B cell (primary cell): ENCODE measurements at regions of chr2 and their contacts with region 1.

Region 1: DNA sequence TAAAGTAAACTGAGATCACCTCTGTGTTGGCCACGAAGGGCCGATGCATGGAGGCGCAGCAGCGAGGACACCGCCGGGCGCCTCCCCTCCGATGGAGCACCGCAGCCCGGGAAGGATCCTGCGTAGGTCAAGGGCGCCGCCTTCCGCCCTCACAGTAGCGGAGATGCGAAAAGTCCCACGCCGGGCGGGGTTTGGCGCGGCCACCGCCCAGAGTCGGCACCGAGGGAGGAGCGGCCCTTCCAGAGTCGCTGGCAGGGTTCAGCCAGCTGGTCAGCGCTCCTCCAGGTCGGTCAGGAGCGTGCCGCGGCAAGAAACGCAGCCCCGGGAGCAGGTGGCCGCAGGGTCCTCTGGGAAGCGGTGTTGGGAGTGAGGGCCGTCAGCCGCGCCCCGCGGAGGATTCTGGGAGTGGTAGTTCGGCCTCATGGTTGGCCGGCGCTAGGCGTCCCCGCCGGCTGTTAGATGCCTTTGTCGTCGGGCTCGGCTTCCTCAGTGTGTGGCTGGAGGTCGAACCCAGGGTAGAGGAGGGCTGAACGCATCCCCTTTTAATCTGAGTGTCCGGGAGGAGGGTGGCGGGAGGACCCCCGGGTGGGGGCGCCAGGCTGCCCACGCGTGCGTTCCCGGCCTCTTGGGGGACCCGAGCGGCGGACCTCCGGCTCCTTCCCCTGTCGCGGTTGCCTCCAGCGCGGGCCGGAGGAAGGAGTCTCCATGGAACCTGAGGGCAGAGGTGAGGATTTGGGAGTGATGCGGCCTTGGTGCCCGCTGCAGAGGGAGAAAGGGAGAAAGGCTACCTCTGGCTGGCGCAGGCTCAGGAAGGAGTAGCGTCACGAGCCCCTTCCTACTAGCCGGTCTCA is at the start of gene ZNF892:
- DNase-seq: peak; percentile 87
- ATAC-seq: peak; percentile 97
- H3K4me3 ChIP-seq: peak within 1 kb of the TSS; percentile 51 to 94 (median 78)
- H3K4me3 Mint-ChIP-seq: peak within 1 kb of the TSS; percentile 96
- H3K27ac ChIP-seq: peak within 1 kb of the TSS; percentile 66 to 89
- H3K27ac Mint-ChIP-seq: peak within 1 kb of the TSS; percentile 86
- H3K4me1 ChIP-seq: peaks cover 10 to 16% of the 10 kb centered on the region in 2 donors
- H3K4me1 Mint-ChIP-seq: peaks cover 16% of the 10 kb centered on the region
- H3K27me3 ChIP-seq: no peaks in the 10 kb centered on the region
- H3K27me3 Mint-ChIP-seq: no peaks in the 10 kb centered on the region
- CTCF ChIP-seq: peak; percentile 42
- total RNA-seq, gene ZNF892: 5.5 and 8.3 TPM in 2 replicates

Region 2: DNA sequence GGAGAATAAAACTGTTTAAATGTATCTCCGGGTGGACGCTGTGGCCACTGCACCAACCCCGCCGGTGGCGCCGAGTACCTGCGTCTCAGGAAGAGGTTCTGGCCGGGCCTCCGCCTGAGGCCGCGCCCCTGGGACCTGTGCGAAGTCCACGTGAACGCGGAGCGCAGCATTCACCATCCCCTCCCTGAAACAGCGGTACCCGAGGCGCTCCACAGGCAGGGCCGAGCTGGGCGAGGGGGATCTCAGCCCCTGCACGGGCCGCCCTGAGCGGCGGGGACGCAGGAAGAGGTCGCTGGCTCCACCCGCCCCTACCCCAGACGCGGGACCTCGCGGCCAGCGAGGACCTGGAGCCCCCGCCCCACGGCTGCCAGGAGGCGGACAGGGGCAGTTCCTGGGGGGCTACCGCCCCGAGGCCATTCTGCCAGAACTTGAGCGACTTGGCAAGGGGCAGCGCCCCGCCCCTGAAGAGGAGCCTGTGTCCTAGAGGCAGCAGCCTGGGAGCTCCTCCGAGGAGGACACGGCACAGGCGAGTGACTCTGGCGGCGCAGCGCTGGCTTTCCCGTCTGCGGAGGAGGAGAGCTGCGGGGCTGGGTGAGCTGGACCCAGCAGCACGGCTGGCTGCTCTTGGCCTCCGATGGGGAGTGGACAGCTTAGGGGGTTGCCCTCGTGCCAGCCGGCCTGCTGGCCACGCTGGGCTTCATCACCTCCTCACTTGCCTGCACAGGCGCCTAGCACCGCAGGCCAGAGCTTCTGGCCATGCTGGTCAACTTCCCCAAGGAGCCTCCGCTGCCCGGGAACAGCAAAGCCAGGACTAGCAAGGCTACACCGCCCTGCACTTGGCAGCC is 345.8 kb before region 1 on chr2:
- CTCF ChIA-PET with region 1: no interaction called
- POLR2A ChIA-PET with region 1: no interaction called
- intact Hi-C with region 1: no loop called
- DNase-seq: no peak
- ATAC-seq: no peak
- H3K4me3 ChIP-seq: no peak overlapping the region
- H3K4me3 Mint-ChIP-seq: no peak overlapping the region
- H3K27ac ChIP-seq: no peak overlapping the region
- H3K27ac Mint-ChIP-seq: no peak overlapping the region
- H3K4me1 ChIP-seq: no peaks in the 10 kb centered on the region
- H3K4me1 Mint-ChIP-seq: no peaks in the 10 kb centered on the region
- H3K27me3 ChIP-seq: peaks cover 0 to 12% (median 2%) of the 10 kb centered on the region in 4 experiments
- H3K27me3 Mint-ChIP-seq: peaks cover 25% of the 10 kb centered on the region
- CTCF ChIP-seq: no peak

Region 3: DNA sequence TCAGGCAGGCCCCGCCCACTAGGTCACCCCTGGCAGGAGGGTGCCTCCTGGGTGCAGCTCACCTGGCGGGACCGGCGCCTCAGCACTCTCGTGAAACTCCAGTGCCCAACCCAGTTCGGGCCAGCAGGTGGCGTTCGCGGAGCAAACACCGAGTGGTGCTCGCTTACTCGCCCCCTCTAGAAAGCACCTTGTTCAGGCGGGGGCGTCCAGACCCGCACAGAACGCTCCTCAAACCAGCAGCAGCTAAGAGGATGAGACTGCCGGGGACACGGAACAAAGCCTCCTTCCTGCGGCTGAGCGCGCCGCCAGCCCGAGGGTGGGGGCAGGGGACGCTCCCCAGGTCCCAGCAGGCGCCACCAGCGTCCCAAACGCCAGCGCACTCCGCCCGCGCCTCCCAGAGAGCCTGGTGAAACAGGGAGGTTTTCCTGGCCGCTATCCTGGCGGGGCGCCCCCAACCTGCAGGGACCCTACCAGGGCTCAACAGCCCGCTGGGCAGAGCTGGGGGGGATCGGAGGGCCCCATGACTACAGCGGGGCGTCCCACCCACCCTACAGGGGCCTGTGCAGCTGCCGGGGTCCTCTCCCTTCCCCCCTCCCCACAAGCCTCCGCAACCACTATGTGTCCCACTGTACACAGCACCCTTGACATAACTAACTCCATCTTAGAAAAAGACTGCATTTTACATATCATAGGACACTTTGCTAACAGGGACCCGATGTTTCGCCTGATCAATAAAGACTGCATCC is 130.4 kb before region 1 on chr2:
- CTCF ChIA-PET with region 1: interaction called, 5 read pairs
- POLR2A ChIA-PET with region 1: no interaction called
- intact Hi-C with region 1: loop called (anchors 2 kb)
- DNase-seq: peak; percentile 73
- ATAC-seq: peak; percentile 90
- H3K4me3 ChIP-seq: peak overlapping the region in 4 of 5 experiments; percentile 7 to 41 (median 20)
- H3K4me3 Mint-ChIP-seq: peak overlapping the region; percentile 64
- H3K27ac ChIP-seq: no peak overlapping the region
- H3K27ac Mint-ChIP-seq: no peak overlapping the region
- H3K4me1 ChIP-seq: peaks cover 9 to 11% of the 10 kb centered on the region in 2 donors
- H3K4me1 Mint-ChIP-seq: peaks cover 10% of the 10 kb centered on the region
- H3K27me3 ChIP-seq: peaks cover 0 to 26% (median 8%) of the 10 kb centered on the region in 4 experiments
- H3K27me3 Mint-ChIP-seq: peaks cover 17% of the 10 kb centered on the region
- CTCF ChIP-seq: peak; percentile 82

Region 4: GRCh38 chr2:95087379-95087778 is 120.0 kb before region 1 on chr2:
- CTCF ChIA-PET with region 1: no interaction called
- POLR2A ChIA-PET with region 1: no interaction called
- intact Hi-C with region 1: no loop called
- DNase-seq: no peak
- ATAC-seq: no peak
- H3K4me3 ChIP-seq: no peak overlapping the region
- H3K4me3 Mint-ChIP-seq: no peak overlapping the region
- H3K27ac ChIP-seq: no peak overlapping the region
- H3K27ac Mint-ChIP-seq: no peak overlapping the region
- H3K4me1 ChIP-seq: no peaks in the 10 kb centered on the region
- H3K4me1 Mint-ChIP-seq: no peaks in the 10 kb centered on the region
- H3K27me3 ChIP-seq: no peaks in the 10 kb centered on the region
- H3K27me3 Mint-ChIP-seq: no peaks in the 10 kb centered on the region
- CTCF ChIP-seq: no peak

Region 5: GRCh38 chr2:95121407-95122196 is 85.7 kb before region 1 on chr2 and contains the start of gene MRPS5:
- CTCF ChIA-PET with region 1: no interaction called
- POLR2A ChIA-PET with region 1: no interaction called
- intact Hi-C with region 1: loop called (anchors 1 kb)
- DNase-seq: peak; percentile 90
- ATAC-seq: peak; percentile 98
- H3K4me3 ChIP-seq: peak within 1 kb of the TSS; percentile 67 to 98 (median 93)
- H3K4me3 Mint-ChIP-seq: peak within 1 kb of the TSS; percentile 95
- H3K27ac ChIP-seq: peak within 1 kb of the TSS; percentile 53 to 94
- H3K27ac Mint-ChIP-seq: peak within 1 kb of the TSS; percentile 95
- H3K4me1 ChIP-seq: peaks cover 22 to 29% of the 10 kb centered on the region in 2 donors
- H3K4me1 Mint-ChIP-seq: peaks cover 42% of the 10 kb centered on the region
- H3K27me3 ChIP-seq: no peaks in the 10 kb centered on the region
- H3K27me3 Mint-ChIP-seq: no peaks in the 10 kb centered on the region
- CTCF ChIP-seq: no peak
- total RNA-seq, gene MRPS5: 46.3 and 48.9 TPM in 2 replicates

Region 6: DNA sequence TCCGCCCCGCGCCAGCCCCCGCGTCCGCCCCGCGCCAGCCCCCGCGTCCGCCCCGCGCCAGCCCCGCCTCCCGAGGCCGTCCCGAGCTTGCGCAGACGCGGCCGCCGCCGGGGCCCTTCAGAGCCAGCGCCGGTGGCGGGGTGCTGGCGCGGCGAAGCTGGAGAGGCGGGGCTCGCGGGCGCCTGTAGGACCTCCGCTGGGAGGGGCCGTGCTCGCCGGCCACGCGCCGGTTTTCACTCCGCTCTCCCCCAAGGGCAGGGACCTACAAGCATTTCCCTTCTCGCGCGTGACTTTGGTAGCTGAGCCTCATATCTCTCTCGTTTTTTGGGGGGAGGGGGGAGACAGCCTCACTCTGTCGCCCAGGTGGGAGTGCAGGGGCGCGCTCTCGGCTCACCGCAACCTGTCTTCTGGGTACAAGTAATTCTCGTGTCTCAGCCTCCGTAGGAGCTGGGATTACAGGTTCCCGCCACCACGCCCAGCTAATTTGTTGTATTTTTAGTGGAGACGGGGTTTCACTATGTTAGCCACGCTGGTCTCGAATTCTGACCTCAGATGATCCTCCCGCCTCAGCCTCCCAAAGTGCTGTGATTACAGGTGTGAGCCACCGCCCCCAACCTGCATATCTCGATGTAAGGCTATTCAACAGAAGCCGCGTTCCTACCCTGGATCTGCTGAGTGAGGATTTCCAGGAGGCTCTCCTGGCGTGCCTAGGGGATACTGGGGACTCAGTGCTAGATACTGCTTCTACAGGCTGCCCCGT is 47.5 kb before region 1 on chr2 and contains the start of gene ZNF514:
- CTCF ChIA-PET with region 1: no interaction called
- POLR2A ChIA-PET with region 1: no interaction called
- intact Hi-C with region 1: loop called (anchors 1 kb)
- DNase-seq: peak; percentile 85
- ATAC-seq: peak; percentile 94
- H3K4me3 ChIP-seq: peak within 1 kb of the TSS; percentile 51 to 90 (median 71)
- H3K4me3 Mint-ChIP-seq: peak within 1 kb of the TSS; percentile 93
- H3K27ac ChIP-seq: peak within 1 kb of the TSS; percentile 41 to 66
- H3K27ac Mint-ChIP-seq: peak within 1 kb of the TSS; percentile 91
- H3K4me1 ChIP-seq: peaks cover 11 to 22% of the 10 kb centered on the region in 2 donors
- H3K4me1 Mint-ChIP-seq: peaks cover 27% of the 10 kb centered on the region
- H3K27me3 ChIP-seq: no peaks in the 10 kb centered on the region
- H3K27me3 Mint-ChIP-seq: no peaks in the 10 kb centered on the region
- CTCF ChIP-seq: no peak
- total RNA-seq, gene ZNF514: 37.0 and 38.7 TPM in 2 replicates

Region 7: DNA sequence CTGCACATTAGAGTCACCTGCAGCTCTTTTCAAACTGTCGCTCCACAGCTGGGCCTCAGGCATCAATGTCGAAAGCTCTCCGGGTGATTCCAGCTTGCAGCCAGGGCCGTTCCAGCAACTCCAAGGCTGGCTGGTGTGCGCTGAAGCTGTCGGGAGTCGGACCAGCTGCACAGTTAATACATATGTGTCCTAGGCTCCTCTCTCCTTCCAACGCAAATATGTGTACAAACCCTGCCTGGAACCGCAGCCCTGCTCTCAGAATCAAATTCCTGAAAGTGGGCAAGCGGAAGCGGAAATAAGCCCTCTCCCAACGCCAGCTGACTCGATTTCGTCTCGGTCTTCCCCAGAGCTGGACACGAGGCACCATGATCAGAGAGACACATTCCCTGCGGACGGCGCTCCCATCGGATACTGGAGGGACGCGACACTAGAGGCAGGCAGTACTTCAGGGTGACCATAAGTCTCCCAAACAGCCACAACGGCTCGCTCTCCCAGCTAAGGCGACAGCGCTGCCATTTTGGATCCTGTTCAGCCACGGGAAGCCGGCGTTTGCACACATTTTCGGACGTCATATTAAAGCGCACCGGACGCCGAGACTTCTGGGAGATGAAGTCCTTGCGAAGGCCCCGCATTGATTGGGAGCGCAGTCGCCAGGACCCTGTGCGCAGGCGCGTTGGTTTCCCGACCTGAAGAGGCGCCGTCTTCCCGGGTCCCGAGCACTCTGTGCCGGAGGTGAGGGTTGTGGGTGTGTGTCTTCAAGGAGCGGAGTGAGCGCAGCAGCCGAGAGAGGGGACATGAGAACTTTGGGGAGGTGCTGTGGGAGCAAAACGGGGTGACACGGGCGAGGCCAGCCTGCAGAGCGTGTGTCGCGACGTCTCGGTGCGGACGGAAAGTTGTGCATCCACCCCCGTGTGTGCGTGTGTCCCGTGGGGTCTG is 41.9 kb before region 1 on chr2 and contains the start of gene ZNF2:
- CTCF ChIA-PET with region 1: no interaction called
- POLR2A ChIA-PET with region 1: no interaction called
- intact Hi-C with region 1: loop called (anchors 1 kb)
- DNase-seq: peak; percentile 96
- ATAC-seq: peak; percentile 94
- H3K4me3 ChIP-seq: peak within 1 kb of the TSS; percentile 70 to 96 (median 94)
- H3K4me3 Mint-ChIP-seq: peak within 1 kb of the TSS; percentile 97
- H3K27ac ChIP-seq: peak within 1 kb of the TSS; percentile 80 to 91
- H3K27ac Mint-ChIP-seq: peak within 1 kb of the TSS; percentile 98
- H3K4me1 ChIP-seq: peaks cover 11 to 16% of the 10 kb centered on the region in 2 donors
- H3K4me1 Mint-ChIP-seq: peaks cover 29% of the 10 kb centered on the region
- H3K27me3 ChIP-seq: no peaks in the 10 kb centered on the region
- H3K27me3 Mint-ChIP-seq: no peaks in the 10 kb centered on the region
- CTCF ChIP-seq: no peak
- total RNA-seq, gene ZNF2: 7.2 and 7.8 TPM in 2 replicates